SK-N-SH (cell line): ENCODE measurements at regions of chr7 and their contacts with region 1.

Region 1: DNA sequence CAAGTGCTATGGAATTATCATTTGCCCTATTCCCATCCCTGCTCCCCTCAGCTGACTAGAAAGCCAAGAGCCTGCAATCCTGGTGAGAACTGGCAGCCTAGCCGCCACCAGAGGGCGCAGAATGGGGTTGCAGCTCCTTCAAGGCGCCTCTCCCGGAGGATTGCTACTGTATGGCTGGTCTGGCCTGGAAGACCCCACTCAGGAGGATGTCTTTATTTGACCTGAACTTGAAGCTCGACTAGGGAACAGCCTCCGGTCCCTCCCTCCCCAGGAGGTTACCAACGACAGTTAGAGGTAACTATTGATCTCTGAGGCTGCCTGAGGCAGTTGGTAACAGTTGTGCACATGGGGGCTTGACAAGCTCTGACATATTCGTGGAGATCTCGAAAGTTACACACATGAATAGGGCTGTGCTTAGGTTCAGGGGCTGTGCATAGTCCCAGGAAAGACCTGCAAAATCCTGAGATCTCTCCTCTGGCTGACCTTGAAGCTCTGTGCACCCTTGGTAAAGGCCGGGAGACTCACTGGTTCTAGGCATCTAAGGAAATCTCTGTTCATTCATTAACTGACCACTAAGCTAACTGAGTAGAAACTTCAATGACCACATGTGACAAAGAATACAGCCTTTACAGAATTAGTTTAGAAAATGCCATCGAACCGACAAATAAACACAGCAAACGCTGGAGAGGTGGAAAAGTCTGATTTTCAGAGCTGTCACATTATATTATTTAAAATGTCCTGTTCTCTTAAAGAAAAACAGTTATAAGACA is 65.7 kb downstream of the TSPAN12 start:
- DNase-seq: peak; percentile 73
- H3K4me3 ChIP-seq: no peak overlapping the region; a peak in 1 of 4 replicates
- H3K27ac ChIP-seq: no peak overlapping the region
- H3K4me1 ChIP-seq: peaks cover 0 to 2% of the 10 kb centered on the region in 2 experiments; a peak in 1 of 4 replicates
- H3K27me3 ChIP-seq: peaks cover 15% of the 10 kb centered on the region; the same call in 1 of the 2 replicates
- CTCF ChIP-seq: peak; percentile 99
- EP300 ChIP-seq: no peak
- RAD21 ChIP-seq: peak; percentile 75

Region 2: GRCh38 chr7:120486164-120486563 is 306.1 kb before region 1 on chr7:
- CTCF ChIA-PET with region 1: no interaction called
- POLR2A ChIA-PET with region 1: no interaction called
- DNase-seq: no peak
- H3K4me3 ChIP-seq: no peak overlapping the region
- H3K27ac ChIP-seq: no peak overlapping the region
- H3K4me1 ChIP-seq: no peaks in the 10 kb centered on the region
- H3K27me3 ChIP-seq: no peaks in the 10 kb centered on the region; the same call in 1 of the 2 replicates
- CTCF ChIP-seq: no peak
- EP300 ChIP-seq: no peak
- RAD21 ChIP-seq: no peak

Region 3: DNA sequence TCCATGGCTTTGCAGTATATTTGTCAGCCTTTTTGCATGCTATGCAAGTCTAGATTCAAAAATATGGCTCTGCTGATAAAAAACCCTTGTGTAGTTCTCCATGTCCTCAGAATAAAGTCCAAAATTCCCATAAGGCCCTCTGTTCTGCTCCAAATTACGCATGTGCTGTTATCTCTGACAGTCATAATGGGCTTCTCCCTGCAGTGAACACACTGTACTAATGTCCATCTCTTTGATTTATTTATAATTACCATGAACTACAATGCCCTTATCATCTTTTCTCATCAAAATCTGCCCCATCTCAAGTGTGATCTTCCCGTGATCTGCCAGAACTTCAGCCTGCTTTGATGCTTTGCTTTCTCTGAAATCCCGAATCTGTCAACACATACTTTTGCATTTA is 22.1 kb before region 1 on chr7:
- CTCF ChIA-PET with region 1: interaction called, 17 read pairs
- POLR2A ChIA-PET with region 1: no interaction called
- DNase-seq: no peak
- H3K4me3 ChIP-seq: no peak overlapping the region
- H3K27ac ChIP-seq: no peak overlapping the region
- H3K4me1 ChIP-seq: no peaks in the 10 kb centered on the region; a peak in 1 of 4 replicates
- H3K27me3 ChIP-seq: 0 out of 2 replicates have a peak, but pooled peaks cover 16% of the 10 kb centered on the region
- CTCF ChIP-seq: no peak
- EP300 ChIP-seq: no peak
- RAD21 ChIP-seq: no peak

Region 4: DNA sequence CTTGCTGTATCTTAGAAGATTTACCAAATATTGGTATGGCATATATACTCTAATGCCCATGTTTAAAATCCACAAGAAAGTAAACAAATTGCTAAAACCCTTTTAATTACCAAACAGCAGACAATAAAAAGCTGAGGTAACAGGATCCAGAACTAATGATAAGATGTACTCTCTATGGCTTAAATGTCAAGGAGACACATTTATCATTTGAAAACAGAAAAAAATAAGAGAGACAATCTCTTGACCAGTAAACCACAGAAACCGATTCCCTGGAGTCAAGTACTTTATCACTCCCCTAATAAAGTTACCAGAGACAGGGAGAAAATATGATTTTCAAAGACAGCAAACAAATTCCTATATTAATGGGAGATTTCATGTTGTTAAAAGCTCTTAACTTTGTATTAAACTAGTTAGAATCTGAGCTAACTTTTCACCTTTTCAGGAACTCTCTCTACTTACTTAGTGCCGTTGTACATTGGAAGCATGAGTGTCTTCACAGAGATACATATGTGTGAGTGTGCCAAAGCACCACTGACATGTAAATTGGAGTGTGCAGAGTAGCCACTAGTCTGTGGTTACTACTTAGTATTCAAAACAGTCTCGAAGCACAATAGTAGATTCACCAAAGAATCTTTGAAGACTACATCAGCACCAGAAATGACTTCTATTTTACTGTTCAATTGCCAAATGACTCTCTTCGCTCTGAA is 21.4 kb after region 1 on chr7:
- CTCF ChIA-PET with region 1: interaction called, 106 read pairs
- POLR2A ChIA-PET with region 1: no interaction called
- DNase-seq: no peak
- H3K4me3 ChIP-seq: no peak overlapping the region
- H3K27ac ChIP-seq: no peak overlapping the region
- H3K4me1 ChIP-seq: no peaks in the 10 kb centered on the region
- H3K27me3 ChIP-seq: peaks cover 6% of the 10 kb centered on the region; the same call in 1 of the 2 replicates
- CTCF ChIP-seq: no peak
- EP300 ChIP-seq: no peak
- RAD21 ChIP-seq: no peak

Region 5: GRCh38 chr7:120857588-120858573 is 65.6 kb after region 1 on chr7 and contains the start of gene TSPAN12:
- CTCF ChIA-PET with region 1: interaction called, 13 read pairs
- POLR2A ChIA-PET with region 1: no interaction called
- DNase-seq: peak; percentile 91
- H3K4me3 ChIP-seq: peak within 1 kb of the TSS; percentile 64 to 66
- H3K27ac ChIP-seq: peak within 1 kb of the TSS in 1 of 2 experiments; percentile 15; a peak in 1 of 4 replicates
- H3K4me1 ChIP-seq: peaks cover 0 to 11% of the 10 kb centered on the region in 2 experiments; a peak in 2 of 4 replicates
- H3K27me3 ChIP-seq: peaks cover 35% of the 10 kb centered on the region
- CTCF ChIP-seq: peak; percentile 64
- EP300 ChIP-seq: no peak
- RAD21 ChIP-seq: peak; percentile 19; the same call in 1 of the 2 replicates
- polyA plus RNA-seq, gene TSPAN12: 0.21 TPM in 1 of 2 replicates, not detected in the other

Region 6: DNA sequence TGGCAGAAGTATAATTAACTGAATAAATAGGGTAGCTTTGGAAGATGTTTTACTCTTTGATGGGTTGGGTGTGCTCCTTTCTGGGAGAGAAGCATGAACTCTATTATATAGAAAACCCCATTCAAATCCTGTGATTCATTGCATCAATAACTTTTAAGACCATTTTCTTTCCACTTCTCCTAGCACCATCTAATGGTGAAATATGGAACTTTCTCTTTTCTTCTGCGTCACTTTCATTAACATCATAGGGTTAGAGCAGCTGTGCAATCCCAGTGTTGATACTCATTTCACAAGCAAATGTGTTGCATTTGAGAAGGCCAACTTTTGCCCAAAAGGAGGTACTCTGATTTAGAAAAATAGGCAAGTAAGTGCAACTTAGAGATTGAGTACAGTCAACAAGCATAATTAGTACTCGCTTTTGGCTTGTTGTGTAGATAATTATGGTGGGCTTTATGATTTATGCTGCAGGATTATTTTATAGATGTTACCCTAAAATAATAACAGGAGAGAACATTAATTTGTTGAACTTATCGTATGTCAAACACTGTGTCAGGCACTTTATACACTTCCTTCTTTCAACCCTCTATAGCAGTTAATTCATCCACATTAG is 289.2 kb after region 1 on chr7:
- CTCF ChIA-PET with region 1: interaction called, 23 read pairs
- POLR2A ChIA-PET with region 1: no interaction called
- DNase-seq: peak; percentile 45
- H3K4me3 ChIP-seq: no peak overlapping the region
- H3K27ac ChIP-seq: no peak overlapping the region
- H3K4me1 ChIP-seq: peaks cover 6 to 33% of the 10 kb centered on the region in 2 experiments
- H3K27me3 ChIP-seq: no peaks in the 10 kb centered on the region
- CTCF ChIP-seq: peak; percentile 91
- EP300 ChIP-seq: no peak
- RAD21 ChIP-seq: peak; percentile 95

Region 7: GRCh38 chr7:121107923-121108498 is 315.7 kb after region 1 on chr7:
- CTCF ChIA-PET with region 1: interaction called, 54 read pairs
- POLR2A ChIA-PET with region 1: no interaction called
- DNase-seq: peak; percentile 45
- H3K4me3 ChIP-seq: no peak overlapping the region
- H3K27ac ChIP-seq: no peak overlapping the region
- H3K4me1 ChIP-seq: no peaks in the 10 kb centered on the region
- H3K27me3 ChIP-seq: no peaks in the 10 kb centered on the region
- CTCF ChIP-seq: peak; percentile 99
- EP300 ChIP-seq: no peak
- RAD21 ChIP-seq: peak; percentile 95